ENCODE measurements at regions of chr13 and their contacts with region 1.

Region 1: DNA sequence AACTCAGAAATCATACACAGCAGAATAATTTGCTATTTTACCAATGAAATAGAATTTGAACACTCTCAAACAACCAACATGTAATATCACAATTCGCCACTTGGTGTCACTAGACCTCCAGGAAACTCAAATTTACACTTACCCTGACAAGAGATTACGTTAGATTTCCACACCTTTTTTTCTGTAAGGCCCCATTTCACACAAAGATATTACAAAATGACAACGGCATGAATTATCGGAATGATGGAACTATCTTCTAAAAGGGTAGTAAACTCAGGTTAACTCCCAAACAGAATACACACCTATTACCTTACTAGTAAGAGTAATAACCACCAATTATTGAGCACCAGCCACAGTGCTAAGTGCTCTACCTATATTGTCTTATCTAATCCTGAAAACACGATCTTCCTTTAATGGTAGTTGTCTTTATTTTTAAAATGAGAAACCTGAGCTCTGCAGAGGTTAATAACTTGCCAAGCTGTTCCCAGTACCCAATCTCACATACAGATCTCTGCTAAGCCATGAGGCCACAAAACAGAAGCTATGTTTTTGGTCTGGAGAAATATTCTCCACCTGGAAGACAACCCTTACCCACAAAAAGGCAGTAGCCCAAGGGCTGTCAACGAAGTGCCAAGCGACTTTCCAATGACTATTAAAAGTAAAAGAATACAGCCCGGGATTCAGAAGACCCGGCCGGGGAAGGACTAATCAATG is 152.4 kb downstream of the DCLK1 start:
- DNase-seq: peak; percentile 54
- H3K4me3 ChIP-seq: no peak overlapping the region
- H3K27ac ChIP-seq: peak overlapping the region in 1 of 2 experiments; percentile 80; a peak in 2 of 4 replicates
- H3K4me1 ChIP-seq: peaks cover 0 to 2% of the 10 kb centered on the region in 2 experiments; a peak in 1 of 4 replicates
- H3K27me3 ChIP-seq: no peaks in the 10 kb centered on the region
- CTCF ChIP-seq: peak; percentile 83
- EP300 ChIP-seq: no peak
- RAD21 ChIP-seq: peak; percentile 97

Region 2: DNA sequence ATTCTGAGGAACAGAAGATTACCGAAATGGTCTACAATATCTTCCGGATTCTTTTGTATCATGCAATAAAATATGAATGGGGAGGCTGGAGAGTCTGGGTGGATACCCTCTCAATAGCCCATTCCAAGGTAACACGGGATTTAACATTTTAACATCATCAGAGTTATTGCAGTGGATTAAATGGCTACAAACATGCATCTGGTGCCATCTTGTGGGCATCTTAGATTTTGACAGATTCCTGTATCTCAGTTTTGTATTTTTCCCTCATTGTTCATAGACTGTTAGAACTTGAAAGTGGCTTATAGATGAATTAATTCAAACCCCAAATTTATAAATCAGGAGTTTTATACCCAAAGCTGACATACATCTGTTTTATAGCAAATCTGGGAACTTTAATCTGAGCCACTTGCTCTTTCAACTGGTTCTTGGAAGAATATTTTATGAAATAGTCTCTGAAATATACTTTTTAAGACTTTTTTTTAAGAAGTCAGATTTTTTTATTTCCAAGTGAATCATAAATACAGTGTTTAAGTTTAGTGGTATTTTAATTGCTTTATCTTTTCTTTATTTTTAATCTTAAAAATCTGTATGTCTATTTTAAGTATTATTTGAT is 821.5 kb before region 1 on chr13:
- CTCF ChIA-PET with region 1: no interaction called
- POLR2A ChIA-PET with region 1: no interaction called
- DNase-seq: peak; percentile 43
- H3K4me3 ChIP-seq: no peak overlapping the region; a peak in 1 of 4 replicates
- H3K27ac ChIP-seq: no peak overlapping the region
- H3K4me1 ChIP-seq: peaks cover 0 to under 1% of the 10 kb centered on the region in 2 experiments; a peak in 2 of 4 replicates
- H3K27me3 ChIP-seq: no peaks in the 10 kb centered on the region
- CTCF ChIP-seq: peak; percentile 80
- EP300 ChIP-seq: no peak
- RAD21 ChIP-seq: peak; percentile 97

Region 3: DNA sequence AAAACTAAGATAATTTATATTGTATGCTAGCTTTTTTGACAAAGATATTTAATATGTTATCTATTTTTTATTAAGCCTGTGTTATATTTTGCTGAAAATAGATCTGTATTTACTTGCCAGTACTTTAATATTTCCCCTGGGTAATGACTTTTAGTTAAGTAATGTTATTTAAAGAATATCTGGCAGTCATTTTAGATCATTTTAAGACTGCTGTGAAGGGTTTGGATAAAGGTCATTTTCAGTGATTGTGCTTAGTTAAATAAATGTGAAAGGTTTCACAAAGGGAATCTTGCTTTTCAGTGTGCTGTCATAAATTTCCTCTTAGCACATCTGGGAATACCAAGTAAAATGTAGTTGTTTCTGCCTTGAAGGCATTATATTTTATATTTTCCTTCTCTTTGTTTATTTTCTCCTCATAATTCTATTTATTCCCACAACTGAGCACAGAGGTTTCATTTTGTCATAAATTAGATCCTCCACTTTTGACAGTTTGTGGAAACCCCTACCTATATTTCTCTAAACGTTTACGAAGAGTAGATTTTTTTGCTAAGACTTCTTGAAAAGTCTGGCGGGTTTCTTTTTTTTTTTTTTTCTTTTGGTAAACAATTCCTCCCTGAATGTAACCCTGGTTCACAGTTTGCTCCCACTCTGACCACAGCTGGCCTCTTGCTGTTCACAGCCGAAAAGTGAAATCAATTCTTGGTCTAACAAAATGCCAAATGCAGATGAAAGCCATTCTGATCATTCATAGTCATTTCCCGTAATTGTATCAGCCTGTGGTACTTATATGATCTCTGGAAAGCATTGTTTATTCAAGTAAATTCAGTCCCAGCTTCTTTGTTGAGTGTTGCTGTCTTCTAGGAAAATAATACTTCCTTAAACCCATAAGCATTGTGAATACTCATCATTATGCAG is 590.1 kb before region 1 on chr13:
- CTCF ChIA-PET with region 1: no interaction called
- POLR2A ChIA-PET with region 1: no interaction called
- DNase-seq: peak; percentile 2
- H3K4me3 ChIP-seq: peak overlapping the region; percentile 30 to 44; a peak in 3 of 4 replicates
- H3K27ac ChIP-seq: peak overlapping the region; percentile 36 to 97
- H3K4me1 ChIP-seq: peaks cover 0 to 26% of the 10 kb centered on the region in 2 experiments; a peak in 3 of 4 replicates
- H3K27me3 ChIP-seq: no peaks in the 10 kb centered on the region
- CTCF ChIP-seq: no peak
- EP300 ChIP-seq: no peak; a peak in 1 of 4 replicates
- RAD21 ChIP-seq: peak; percentile 20; the same call in 1 of the 2 replicates

Region 4: GRCh38 chr13:36251526-36251925 is 272.8 kb after region 1 on chr13:
- CTCF ChIA-PET with region 1: interaction called, 11 read pairs
- POLR2A ChIA-PET with region 1: no interaction called
- DNase-seq: no peak
- H3K4me3 ChIP-seq: no peak overlapping the region
- H3K27ac ChIP-seq: no peak overlapping the region
- H3K4me1 ChIP-seq: no peaks in the 10 kb centered on the region
- H3K27me3 ChIP-seq: no peaks in the 10 kb centered on the region
- CTCF ChIP-seq: no peak
- EP300 ChIP-seq: no peak
- RAD21 ChIP-seq: no peak

Region 5: DNA sequence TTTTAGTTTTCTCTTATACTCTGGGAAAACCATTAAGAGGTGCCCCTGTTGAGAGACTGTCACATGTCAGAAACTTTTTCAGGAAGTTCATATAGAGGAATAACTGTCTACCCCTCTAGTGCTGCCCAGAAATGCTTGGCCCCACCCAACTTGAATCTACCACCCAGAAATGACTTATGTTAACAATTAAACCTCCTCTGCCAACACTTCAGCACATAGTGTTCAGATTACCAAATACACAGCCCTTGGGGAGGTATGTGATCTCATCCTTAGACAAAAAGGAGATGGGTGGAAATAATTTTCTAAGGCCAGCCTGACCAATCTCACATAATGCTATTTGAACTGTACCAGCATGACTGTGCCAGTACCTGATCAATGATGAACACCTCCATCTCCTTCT is 283.2 kb after region 1 on chr13:
- CTCF ChIA-PET with region 1: interaction called, 13 read pairs
- POLR2A ChIA-PET with region 1: no interaction called
- DNase-seq: no peak
- H3K4me3 ChIP-seq: no peak overlapping the region
- H3K27ac ChIP-seq: no peak overlapping the region
- H3K4me1 ChIP-seq: no peaks in the 10 kb centered on the region
- H3K27me3 ChIP-seq: no peaks in the 10 kb centered on the region
- CTCF ChIP-seq: no peak
- EP300 ChIP-seq: no peak
- RAD21 ChIP-seq: no peak

Region 6: DNA sequence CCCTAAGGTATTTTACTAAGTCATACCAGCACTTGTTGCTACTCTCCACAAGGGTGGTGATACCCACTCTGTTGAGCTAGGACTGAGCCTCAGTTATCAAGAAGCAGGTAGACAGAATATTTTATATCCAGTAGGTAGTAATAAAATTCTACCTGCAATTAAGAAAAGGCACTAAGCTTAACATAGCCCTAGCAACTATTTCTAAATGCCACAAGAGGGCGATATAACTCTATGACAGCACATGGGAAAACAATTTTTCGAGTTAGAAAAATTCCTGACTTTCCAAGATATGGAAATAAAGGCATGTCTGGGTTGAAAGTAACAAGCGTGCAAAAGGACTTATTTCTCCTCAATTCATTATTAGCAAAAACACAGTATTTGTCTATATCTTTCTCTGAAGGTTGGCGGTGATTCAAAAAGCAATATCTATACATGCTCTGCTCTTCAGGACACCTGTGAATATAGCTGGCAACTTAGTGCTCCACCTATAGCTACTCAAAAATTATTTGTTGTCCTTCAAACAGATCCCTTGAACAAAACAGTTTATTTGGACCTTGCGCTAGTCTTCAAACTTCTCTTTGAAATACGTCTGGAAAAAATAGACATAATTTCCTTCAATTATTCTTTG is 304.2 kb after region 1 on chr13:
- CTCF ChIA-PET with region 1: interaction called, 228 read pairs
- POLR2A ChIA-PET with region 1: no interaction called
- DNase-seq: peak; percentile 44
- H3K4me3 ChIP-seq: no peak overlapping the region; a peak in 1 of 4 replicates
- H3K27ac ChIP-seq: no peak overlapping the region
- H3K4me1 ChIP-seq: no peaks in the 10 kb centered on the region; a peak in 1 of 4 replicates
- H3K27me3 ChIP-seq: no peaks in the 10 kb centered on the region
- CTCF ChIP-seq: peak; percentile 92
- EP300 ChIP-seq: no peak
- RAD21 ChIP-seq: peak; percentile 88

Region 7: DNA sequence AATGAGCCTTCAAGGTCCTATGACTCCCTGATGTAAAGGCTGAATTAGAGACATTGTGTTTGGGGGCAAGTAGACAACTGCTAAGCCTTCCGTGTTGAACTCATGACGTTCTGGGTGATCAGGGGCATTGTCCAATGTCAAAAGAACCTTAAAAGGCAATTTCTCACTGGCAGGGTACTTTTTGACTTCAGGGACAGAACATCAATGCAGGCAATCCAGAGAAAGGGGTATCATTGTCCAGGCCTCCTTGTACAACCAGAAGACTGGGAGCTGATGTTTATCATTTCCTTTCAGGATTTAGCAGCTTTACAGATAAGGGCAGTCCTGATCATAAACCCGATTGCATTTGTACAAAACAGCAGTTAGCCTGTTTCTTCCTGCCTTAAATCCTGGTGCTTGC is 966.3 kb after region 1 on chr13:
- CTCF ChIA-PET with region 1: no interaction called
- POLR2A ChIA-PET with region 1: no interaction called
- DNase-seq: no peak
- H3K4me3 ChIP-seq: no peak overlapping the region
- H3K27ac ChIP-seq: peak overlapping the region in 1 of 2 experiments; percentile 35; a peak in 1 of 4 replicates
- H3K4me1 ChIP-seq: peaks cover 0 to 7% of the 10 kb centered on the region in 2 experiments; a peak in 2 of 4 replicates
- H3K27me3 ChIP-seq: no peaks in the 10 kb centered on the region
- CTCF ChIP-seq: no peak
- EP300 ChIP-seq: peak in 1 of 2 experiments; percentile 67; a peak in 2 of 4 replicates
- RAD21 ChIP-seq: no peak